WTC11 (cell line): ENCODE measurements at regions of chr1 and their contacts with region 1.

Region 1: GRCh38 chr1:18794561-18794960 is 64.9 kb downstream of the TAS1R2 start:
- DNase-seq: peak; percentile 72
- ATAC-seq: peak; percentile 94
- H3K4me3 Mint-ChIP-seq: no peak overlapping the region
- H3K27ac Mint-ChIP-seq: peak overlapping the region; percentile 6; the same call in 1 of the 2 replicates
- H3K4me1 Mint-ChIP-seq: peaks cover 20% of the 10 kb centered on the region
- H3K27me3 Mint-ChIP-seq: peaks cover 4% of the 10 kb centered on the region
- CTCF ChIP-seq: no peak

Region 2: DNA sequence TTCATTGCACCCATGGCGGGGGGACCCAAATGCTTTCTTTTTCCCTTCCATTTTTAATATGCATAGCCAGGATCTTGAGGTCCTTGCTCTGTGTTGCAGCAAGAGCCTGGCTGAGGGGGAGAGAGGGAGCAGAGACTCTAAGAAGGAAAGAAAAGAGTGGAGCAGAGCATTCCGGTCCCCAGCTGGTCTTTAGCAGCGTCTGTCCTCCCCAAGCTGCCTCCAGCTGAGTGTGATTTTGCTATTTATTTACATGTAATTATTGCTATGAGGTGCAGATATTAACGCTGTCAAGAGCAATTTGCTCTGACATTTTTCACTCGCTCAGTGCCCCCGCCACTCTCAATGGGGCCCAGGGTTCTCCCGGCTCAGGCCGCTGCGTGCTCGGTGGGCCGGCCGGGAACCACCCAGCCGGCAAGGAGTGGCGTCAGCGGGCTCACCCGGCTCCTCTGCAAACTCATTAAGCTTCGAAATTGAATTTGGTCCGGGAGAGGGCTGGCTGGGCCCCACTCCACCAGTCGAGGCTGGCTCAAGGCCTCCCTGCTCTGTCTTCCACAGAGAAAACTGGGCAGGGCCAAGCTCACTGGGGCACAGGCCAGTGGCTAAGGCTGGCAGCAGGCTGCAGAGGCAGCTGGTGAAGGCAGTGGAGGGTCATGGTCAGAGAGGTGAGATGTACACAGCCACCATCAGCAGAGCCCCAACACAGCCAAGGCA is 70.7 kb before region 1 on chr1:
- CTCF ChIA-PET with region 1: interaction called, 11 read pairs
- POLR2A ChIA-PET with region 1: no interaction called
- DNase-seq: no peak
- ATAC-seq: no peak; the same call in 1 of the 2 replicates
- H3K4me3 Mint-ChIP-seq: no peak overlapping the region
- H3K27ac Mint-ChIP-seq: no peak overlapping the region
- H3K4me1 Mint-ChIP-seq: peaks cover 19% of the 10 kb centered on the region
- H3K27me3 Mint-ChIP-seq: peaks cover 39% of the 10 kb centered on the region
- CTCF ChIP-seq: no peak

Region 3: GRCh38 chr1:18783705-18784481 is 10.7 kb before region 1 on chr1:
- CTCF ChIA-PET with region 1: interaction called, 30 read pairs
- POLR2A ChIA-PET with region 1: no interaction called
- DNase-seq: no peak
- ATAC-seq: peak; percentile 69
- H3K4me3 Mint-ChIP-seq: peak overlapping the region; percentile 76
- H3K27ac Mint-ChIP-seq: no peak overlapping the region
- H3K4me1 Mint-ChIP-seq: peaks cover 35% of the 10 kb centered on the region
- H3K27me3 Mint-ChIP-seq: peaks cover 15% of the 10 kb centered on the region
- CTCF ChIP-seq: no peak

Region 4: DNA sequence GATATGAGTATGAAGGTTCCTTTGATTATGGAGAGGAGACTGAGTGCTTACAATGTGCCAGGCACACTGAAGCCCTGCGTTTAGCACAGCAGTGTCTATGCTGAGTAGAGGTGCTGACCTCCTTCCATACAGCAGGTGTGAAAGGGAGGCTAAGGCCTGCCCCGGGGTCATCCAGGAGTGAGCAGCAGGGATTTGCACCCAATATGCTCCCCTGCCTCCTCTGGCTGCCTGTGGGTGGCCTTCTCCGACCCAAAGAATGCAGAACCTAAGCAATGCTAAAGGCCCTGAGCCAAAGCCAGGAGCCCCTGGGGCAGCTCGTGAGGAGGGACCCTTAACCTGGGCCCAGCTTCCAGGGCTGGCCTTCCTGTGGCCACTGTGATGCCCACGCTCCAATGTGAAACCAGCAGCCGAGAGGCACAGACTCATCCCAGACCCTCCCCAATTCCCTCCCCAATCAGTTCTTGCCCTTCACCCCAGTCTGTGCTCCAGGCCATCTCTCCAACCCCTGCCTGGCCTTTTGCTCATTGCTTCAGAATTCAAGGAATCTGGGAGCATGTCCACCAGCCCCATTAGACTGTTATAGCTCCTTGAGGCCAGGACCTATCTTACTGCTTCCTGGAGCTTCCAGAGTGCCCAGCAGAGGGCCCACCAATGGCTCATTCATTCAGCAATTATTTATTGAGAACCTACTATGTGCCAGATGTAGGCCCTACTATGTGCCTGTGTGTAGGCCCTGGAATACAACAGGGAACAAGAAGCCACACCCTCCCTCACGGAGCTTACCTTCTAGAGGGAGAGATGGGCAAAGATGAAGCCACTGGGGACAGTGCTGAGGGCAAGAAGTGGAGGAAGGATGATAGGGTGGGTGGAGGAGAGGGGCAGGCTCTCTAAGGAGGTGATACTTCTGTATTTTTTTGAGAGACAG is 11.6 kb after region 1 on chr1:
- CTCF ChIA-PET with region 1: interaction called, 19 read pairs
- POLR2A ChIA-PET with region 1: no interaction called
- DNase-seq: no peak
- ATAC-seq: no peak
- H3K4me3 Mint-ChIP-seq: no peak overlapping the region
- H3K27ac Mint-ChIP-seq: no peak overlapping the region
- H3K4me1 Mint-ChIP-seq: peaks cover 4% of the 10 kb centered on the region; the same call in 1 of the 2 replicates
- H3K27me3 Mint-ChIP-seq: no peaks in the 10 kb centered on the region; the same call in 1 of the 2 replicates
- CTCF ChIP-seq: no peak

Region 5: GRCh38 chr1:18830596-18830995 is 36.0 kb after region 1 on chr1:
- CTCF ChIA-PET with region 1: no interaction called
- POLR2A ChIA-PET with region 1: no interaction called
- DNase-seq: no peak
- ATAC-seq: no peak
- H3K4me3 Mint-ChIP-seq: no peak overlapping the region
- H3K27ac Mint-ChIP-seq: no peak overlapping the region
- H3K4me1 Mint-ChIP-seq: no peaks in the 10 kb centered on the region
- H3K27me3 Mint-ChIP-seq: peaks cover 32% of the 10 kb centered on the region
- CTCF ChIP-seq: no peak

Region 6: DNA sequence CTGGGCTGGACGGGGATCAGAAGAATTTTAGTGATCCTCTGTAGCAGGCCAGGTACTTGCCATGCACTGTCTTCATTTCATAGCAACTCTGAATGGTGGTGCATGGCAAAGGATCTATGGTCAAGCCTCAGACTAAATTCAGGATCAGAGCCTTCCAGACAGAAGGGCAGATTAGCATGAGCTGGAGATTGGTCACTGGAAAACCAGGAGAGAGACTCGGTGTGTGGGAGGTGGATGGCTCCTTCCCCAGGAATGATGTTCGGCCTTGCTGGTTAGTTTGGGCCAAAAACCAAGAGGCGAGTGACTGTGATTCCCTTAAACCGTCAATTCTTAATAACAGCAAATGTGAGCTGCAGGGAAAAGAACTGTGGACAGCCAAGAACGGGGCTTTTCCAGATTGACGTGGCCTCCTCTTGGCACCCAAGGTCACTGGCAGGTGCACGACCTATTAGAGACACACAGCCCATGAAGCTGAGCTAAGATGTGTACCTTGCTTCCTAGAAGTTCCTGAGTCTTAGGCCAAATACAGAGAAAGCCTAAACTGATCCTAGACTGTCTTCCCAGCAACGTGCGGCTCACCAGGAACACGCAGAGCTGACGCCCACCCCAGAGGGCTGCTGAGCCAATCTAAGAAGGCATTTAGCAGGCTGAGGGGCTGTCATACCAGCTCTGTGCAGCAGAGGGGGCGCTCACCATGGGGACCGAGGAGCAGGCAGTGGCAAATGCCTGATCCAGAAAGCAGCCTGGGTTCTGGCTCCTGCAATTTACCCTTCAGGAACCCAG is 89.3 kb after region 1 on chr1:
- CTCF ChIA-PET with region 1: no interaction called
- POLR2A ChIA-PET with region 1: no interaction called
- DNase-seq: peak; percentile 90
- ATAC-seq: peak; percentile 92
- H3K4me3 Mint-ChIP-seq: no peak overlapping the region
- H3K27ac Mint-ChIP-seq: no peak overlapping the region
- H3K4me1 Mint-ChIP-seq: no peaks in the 10 kb centered on the region; the same call in 1 of the 2 replicates
- H3K27me3 Mint-ChIP-seq: no peaks in the 10 kb centered on the region
- CTCF ChIP-seq: peak; percentile 85